Heart left ventricle (tissue), 16 donors: ENCODE measurements at regions of chr17 and their contacts with region 1.

Region 1: DNA sequence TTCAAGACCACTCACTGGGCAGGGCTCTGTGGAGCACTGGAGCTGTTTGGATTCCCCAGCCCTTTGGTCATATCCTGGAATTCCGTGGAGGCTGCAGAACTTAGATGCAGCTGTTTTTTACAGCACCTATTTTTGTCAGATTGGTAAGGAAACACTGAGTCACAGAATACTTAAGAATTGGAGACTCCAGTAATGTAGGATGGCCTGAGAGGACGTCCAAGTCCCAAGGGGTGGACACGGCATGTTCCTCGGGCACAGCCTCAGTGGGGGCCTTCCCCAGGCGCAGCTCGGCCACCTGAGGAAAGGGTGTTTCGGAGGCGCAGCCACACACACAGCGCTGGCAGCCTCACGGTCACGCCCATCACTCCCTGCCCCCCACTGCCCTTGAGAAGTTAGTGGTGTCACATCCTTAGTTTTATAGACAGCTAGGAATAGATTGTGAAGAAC is 14.8 kb downstream of the PLD6 start:
- DNase-seq: peak in 4 of 5 donors; percentile 49 to 82 (median 68)
- ATAC-seq: peak; percentile 75 to 83 (median 80)
- H3K4me3 ChIP-seq: peak overlapping the region in 1 of 12 donors; percentile 3
- H3K27ac ChIP-seq: peak overlapping the region; percentile 57 to 86 (median 76)
- H3K4me1 ChIP-seq: peaks cover 0 to 49% (median 32%) of the 10 kb centered on the region in 12 donors
- H3K27me3 ChIP-seq: no peaks in the 10 kb centered on the region
- CTCF ChIP-seq: no peak
- POLR2A ChIP-seq: peak in 1 of 2 donors; percentile 14

Region 2: DNA sequence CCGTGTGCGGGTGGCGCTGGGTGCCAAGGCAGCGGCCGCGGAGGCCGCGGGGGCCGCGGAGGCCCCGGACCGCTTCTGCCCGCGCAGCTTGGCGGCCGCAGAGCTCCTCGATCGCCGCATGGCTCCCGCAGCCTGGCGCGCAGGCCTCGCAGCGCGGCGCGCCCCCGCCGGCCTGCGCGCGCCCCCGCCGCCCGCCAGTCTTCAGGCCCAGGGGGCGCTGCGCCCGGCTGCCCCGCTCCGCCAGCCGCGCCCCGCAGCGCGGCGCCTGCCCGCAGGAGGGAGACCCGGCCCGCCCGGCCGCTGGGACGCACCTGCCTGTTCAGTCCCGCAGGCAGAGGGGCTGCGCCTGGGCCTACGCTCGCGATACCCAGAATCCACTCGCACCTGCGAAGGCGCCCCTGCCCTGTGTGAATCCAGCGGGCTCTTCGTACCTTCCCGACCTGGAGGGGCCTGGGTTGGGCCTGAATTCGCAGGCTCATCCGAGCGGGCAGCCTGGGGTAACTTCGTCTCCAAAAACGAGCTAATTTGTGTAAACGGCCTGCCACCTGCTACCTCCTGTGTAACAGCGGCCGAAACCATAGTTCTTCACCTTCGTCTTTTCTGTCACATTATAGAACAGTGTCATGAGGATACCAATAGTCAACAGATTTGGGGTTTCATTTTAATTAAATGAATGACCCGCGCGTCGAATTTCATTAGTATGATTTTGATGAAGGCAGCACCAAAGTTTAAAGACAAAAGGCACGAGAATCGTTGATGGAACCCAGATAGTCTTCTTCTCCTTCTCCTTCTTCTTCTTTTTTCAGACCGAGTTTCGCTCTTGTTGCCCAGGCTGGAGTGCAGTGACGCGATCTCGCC is 837.8 kb before region 1 on chr17 and contains the start of gene CENPV:
- intact Hi-C with region 1: no loop called
- DNase-seq: peak; percentile 20 to 70 (median 36)
- ATAC-seq: peak; percentile 25 to 82 (median 54)
- H3K4me3 ChIP-seq: peak within 1 kb of the TSS; percentile 48 to 85 (median 66)
- H3K27ac ChIP-seq: peak within 1 kb of the TSS in 3 of 12 donors; percentile 14 to 54 (median 42)
- H3K4me1 ChIP-seq: peaks cover 0 to 19% (median 7%) of the 10 kb centered on the region in 12 donors
- H3K27me3 ChIP-seq: peaks cover 0 to 14% (median 0%) of the 10 kb centered on the region in 9 donors
- CTCF ChIP-seq: peak in 4 of 12 donors; percentile 8 to 28 (median 12)
- POLR2A ChIP-seq: no peak
- total RNA-seq, gene CENPV: 9.7 to 15.0 (median 11.5) TPM

Region 3: GRCh38 chr17:17051791-17052461 is 139.4 kb before region 1 on chr17:
- intact Hi-C with region 1: no loop called
- DNase-seq: peak in 2 of 5 donors; percentile 47 to 63
- ATAC-seq: peak; percentile 19 to 57 (median 36)
- H3K4me3 ChIP-seq: peak overlapping the region in 2 of 12 donors; percentile 4 to 13
- H3K27ac ChIP-seq: peak overlapping the region; percentile 13 to 86 (median 64)
- H3K4me1 ChIP-seq: peaks cover 30 to 100% (median 89%) of the 10 kb centered on the region in 12 donors
- H3K27me3 ChIP-seq: no peaks in the 10 kb centered on the region
- CTCF ChIP-seq: no peak
- POLR2A ChIP-seq: no peak

Region 4: DNA sequence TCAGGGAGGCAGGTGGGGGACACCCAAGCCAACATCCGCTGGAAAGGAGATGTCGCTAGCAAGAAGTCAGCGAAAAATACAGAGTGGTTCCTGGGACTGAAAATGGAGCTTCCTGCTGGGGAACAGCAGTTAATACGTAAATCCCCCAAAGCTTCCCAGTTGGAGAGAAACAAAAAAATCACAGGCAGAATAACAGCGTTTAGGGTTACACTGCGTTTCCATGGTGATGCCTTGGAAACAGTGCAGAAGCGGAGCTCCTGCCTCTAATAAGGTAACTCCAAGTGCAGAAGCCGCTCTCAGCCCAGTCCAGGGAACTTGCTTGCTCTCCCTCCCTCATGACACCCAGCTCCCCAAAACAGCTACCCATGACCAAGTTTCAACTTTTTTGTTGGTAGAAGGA is 58.6 kb before region 1 on chr17:
- intact Hi-C with region 1: no loop called
- DNase-seq: no peak
- ATAC-seq: no peak
- H3K4me3 ChIP-seq: no peak overlapping the region
- H3K27ac ChIP-seq: no peak overlapping the region
- H3K4me1 ChIP-seq: peaks cover 0 to 46% (median 16%) of the 10 kb centered on the region in 12 donors
- H3K27me3 ChIP-seq: no peaks in the 10 kb centered on the region
- CTCF ChIP-seq: no peak
- POLR2A ChIP-seq: no peak

Region 5: DNA sequence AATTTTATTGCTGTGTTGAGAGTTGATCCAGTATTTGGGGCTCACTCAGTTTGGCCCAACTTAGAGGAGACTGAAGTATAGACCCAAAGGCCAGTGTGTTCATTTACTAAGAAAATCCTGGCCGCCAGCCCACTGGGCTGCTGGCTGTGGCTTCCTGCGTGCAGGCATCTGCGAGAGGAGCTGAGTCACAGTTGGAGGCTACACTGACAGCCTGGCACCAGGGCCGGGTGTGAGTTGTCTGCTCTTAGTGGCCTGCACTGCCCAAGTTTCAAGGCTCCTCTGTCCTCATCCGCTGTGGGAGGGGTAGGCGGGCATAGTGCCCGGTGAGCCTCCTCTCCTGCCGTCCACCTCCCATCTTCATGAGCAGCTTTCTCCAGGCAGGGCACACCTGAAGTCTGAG is 39.4 kb before region 1 on chr17:
- intact Hi-C with region 1: loop called in 1 of 10 experiments (anchors 5 kb)
- DNase-seq: peak; percentile 84 to 95 (median 91)
- ATAC-seq: peak; percentile 92 to 97 (median 95)
- H3K4me3 ChIP-seq: no peak overlapping the region
- H3K27ac ChIP-seq: peak overlapping the region; percentile 35 to 90 (median 82)
- H3K4me1 ChIP-seq: peaks cover 12 to 45% (median 27%) of the 10 kb centered on the region in 12 donors
- H3K27me3 ChIP-seq: no peaks in the 10 kb centered on the region
- CTCF ChIP-seq: no peak
- POLR2A ChIP-seq: no peak

Region 6: GRCh38 chr17:17164676-17165075 is 26.7 kb before region 1 on chr17:
- intact Hi-C with region 1: no loop called
- DNase-seq: peak in 1 of 5 donors; percentile 44
- ATAC-seq: no peak
- H3K4me3 ChIP-seq: no peak overlapping the region
- H3K27ac ChIP-seq: no peak overlapping the region
- H3K4me1 ChIP-seq: peaks cover 0 to 15% (median 0%) of the 10 kb centered on the region in 12 donors
- H3K27me3 ChIP-seq: no peaks in the 10 kb centered on the region
- CTCF ChIP-seq: no peak
- POLR2A ChIP-seq: no peak

Region 7: DNA sequence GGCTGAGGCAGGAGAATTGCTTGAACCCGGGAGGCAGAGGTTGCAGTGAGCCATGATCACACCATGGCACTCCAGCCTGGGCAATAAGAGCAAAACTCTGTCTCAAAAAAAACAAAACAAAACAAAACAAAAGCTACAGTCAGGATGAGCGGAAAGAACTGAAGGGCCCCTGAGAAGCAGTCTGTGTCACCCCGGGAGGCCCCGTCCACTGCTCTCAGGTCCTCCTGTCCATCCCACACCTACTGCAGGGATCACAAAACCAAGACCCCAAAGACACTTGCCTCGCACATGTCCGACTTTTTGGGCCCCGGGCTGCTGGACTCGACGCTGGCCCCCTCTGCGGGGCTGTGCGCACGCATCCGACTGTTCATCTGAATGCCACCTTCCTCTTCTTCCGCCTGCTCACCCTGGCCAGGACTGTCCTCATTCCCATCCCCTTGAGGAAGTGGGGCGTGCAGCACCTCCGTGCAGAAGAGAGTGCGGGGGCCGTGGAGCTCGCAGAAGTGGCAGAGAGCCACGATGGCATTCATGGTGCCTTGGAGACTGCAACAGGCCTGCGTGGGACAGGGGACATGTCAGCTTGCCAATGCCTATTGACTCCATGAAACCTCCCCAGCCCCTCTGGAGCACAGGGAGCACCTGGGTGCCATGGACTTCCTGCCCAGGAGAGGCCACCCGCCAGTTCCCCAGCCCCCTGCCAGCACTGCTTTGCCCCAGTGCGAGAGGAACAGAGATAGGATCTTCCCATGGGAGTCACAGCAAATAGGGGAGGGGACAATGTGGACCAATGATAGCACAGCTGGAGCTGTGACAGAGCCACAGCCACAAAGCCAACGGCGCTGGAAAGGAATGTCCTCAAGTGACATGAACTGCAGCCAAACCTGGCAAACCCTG is 36.5 kb after region 1 on chr17:
- intact Hi-C with region 1: loop called in 2 of 10 experiments (anchors 2 to 10 kb)
- DNase-seq: peak in 4 of 5 donors; percentile 59 to 85 (median 74)
- ATAC-seq: peak; percentile 88 to 93 (median 90)
- H3K4me3 ChIP-seq: no peak overlapping the region
- H3K27ac ChIP-seq: peak overlapping the region in 9 of 12 donors; percentile 29 to 83 (median 71)
- H3K4me1 ChIP-seq: peaks cover 0 to 44% (median 19%) of the 10 kb centered on the region in 12 donors
- H3K27me3 ChIP-seq: no peaks in the 10 kb centered on the region
- CTCF ChIP-seq: no peak
- POLR2A ChIP-seq: no peak